Thyroid gland (tissue), 4 donors: ENCODE measurements at regions of chr11 and their contacts with region 1.

Region 1: DNA sequence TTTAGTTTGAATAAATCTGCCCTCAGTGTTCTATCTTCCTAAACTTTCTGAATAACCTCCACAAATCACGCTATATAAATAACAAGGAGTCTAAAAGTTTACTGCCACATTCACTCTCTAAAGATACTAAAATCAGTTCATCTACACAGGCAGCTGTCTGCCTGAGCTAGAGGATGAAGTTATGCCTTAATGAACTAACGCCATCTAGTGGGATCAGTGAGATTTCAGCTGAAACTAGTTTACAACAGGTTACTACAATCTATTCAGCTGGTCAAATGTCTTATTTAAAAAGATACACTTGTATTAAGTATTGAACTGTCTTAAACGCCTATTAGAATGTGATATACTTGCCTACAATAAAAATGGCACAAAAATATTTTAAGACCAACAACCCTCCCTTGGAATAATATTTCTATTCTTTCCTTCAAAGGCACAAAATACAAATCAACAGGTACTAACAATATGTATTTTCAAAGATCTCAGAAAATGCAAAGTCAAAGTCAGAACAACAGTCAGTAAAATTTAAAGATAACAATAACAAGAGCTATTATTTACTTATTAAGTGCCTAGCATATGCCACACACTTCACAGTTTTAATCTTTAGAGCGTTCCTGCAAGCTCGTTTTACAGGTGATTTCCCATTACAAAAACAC is 84.1 kb downstream of the LARGE2 start:
- DNase-seq: peak in 1 of 2 donors; percentile 16
- H3K4me3 ChIP-seq: no peak overlapping the region
- H3K27ac ChIP-seq: no peak overlapping the region
- H3K4me1 ChIP-seq: peaks cover 0 to 7% of the 10 kb centered on the region in 2 donors
- H3K27me3 ChIP-seq: no peaks in the 10 kb centered on the region
- CTCF ChIP-seq: peak; percentile 32 to 80 (median 70)
- POLR2A ChIP-seq: no peak

Region 2: DNA sequence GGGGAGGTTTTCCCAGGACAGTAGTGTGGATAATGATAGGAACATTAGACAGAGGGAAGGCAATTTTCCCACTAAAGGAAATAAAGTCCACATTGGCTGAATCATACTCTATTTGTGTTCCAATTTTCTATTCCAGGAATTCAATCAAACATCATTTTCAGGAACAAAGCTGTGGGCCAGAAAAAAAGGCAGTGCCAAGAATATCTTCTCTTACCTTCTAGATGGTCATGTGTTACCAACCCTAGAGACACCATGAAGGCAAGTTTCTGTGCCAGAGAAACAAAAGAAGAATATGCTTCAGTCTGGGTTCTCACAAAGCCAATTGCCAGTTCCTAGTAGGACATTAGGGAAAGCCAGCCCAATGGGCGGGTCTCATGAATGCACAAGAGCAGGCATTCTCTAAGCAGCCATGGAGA is 56.5 kb before region 1 on chr11:
- intact Hi-C with region 1: loop called (anchors 10 kb)
- DNase-seq: no peak
- H3K4me3 ChIP-seq: no peak overlapping the region
- H3K27ac ChIP-seq: no peak overlapping the region
- H3K4me1 ChIP-seq: no peaks in the 10 kb centered on the region
- H3K27me3 ChIP-seq: no peaks in the 10 kb centered on the region
- CTCF ChIP-seq: no peak
- POLR2A ChIP-seq: no peak

Region 3: DNA sequence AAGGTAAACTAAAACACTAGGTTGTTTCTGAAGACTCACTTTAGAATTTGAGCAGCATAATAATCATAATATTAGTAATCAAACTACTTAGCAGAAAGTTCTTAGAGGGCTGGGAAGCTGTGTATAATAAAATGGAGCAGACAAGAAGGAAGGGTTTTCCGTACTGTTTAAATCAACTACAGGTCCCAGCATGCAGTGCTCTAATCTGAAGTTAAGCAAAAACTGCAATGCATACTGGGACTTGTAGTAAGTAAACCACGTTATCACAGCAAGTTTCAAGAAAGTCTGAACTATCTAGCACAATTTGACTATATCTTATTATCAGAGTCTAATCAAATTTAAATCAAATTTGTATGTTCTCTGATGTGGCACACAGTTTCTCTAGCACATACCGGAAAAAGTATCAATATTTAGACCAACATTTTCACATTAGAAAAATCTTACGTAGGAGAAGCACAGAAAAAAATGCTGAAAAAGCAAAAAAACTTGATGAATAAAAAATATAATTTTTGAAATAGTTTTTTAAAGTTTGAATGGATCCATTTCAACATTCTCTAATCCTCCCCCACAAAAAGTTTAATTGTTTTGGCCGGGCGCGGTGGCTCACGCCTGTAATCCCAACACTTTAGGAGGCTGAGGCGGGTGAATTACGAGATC is 106.5 kb after region 1 on chr11:
- intact Hi-C with region 1: no loop called
- DNase-seq: no peak
- H3K4me3 ChIP-seq: no peak overlapping the region
- H3K27ac ChIP-seq: no peak overlapping the region
- H3K4me1 ChIP-seq: peaks cover 21 to 42% of the 10 kb centered on the region in 2 donors
- H3K27me3 ChIP-seq: no peaks in the 10 kb centered on the region
- CTCF ChIP-seq: no peak
- POLR2A ChIP-seq: no peak